ENCODE measurements at regions of chr9 and their contacts with region 1.

Region 1: DNA sequence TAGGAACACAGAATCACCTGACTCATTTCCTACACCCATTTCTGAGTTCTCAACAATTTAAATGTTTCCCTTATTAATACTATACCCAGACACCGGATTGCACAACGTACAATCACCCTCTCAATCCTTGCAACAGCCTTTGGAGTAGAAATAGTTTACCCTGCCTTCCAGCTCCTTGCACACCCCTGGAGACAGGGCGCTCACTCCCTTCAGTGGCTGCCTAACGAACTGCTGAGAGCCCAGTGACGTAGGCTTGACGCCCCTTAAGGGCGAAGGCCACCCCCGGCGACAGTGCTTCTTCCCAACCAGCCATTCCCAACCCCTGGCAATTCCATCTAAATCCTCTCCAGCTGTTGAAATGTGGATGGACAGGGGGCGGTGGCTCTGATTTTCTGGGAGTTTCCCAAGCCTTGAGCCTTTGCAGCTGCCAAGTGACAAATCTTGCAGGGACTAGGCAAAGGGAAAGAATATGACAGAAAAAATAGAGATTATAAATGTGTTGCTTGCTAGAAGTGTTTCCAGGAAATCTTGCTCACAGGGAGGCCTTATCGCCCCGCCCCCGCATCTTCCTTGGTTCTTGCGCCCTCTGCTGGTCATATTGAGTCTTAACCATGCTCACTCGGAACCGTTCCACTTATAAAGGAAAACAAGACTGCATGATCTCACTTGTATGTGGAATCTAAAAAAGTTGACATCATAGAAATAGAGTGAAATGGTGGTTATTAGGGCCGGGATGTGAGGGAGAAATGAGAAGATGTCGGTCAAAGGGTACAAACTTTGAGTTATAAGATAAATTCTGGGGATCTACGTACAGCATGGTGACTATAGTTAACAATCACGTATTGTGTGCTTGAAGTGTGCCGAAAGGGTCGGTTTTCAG is 7.6 kb upstream of the BARX1 start:
- DNase-seq: peak; percentile 84
- H3K4me3 ChIP-seq: no peak overlapping the region
- H3K27ac ChIP-seq: no peak overlapping the region
- H3K4me1 ChIP-seq: no peaks in the 10 kb centered on the region
- CTCF ChIP-seq: peak; percentile 95

Region 2: DNA sequence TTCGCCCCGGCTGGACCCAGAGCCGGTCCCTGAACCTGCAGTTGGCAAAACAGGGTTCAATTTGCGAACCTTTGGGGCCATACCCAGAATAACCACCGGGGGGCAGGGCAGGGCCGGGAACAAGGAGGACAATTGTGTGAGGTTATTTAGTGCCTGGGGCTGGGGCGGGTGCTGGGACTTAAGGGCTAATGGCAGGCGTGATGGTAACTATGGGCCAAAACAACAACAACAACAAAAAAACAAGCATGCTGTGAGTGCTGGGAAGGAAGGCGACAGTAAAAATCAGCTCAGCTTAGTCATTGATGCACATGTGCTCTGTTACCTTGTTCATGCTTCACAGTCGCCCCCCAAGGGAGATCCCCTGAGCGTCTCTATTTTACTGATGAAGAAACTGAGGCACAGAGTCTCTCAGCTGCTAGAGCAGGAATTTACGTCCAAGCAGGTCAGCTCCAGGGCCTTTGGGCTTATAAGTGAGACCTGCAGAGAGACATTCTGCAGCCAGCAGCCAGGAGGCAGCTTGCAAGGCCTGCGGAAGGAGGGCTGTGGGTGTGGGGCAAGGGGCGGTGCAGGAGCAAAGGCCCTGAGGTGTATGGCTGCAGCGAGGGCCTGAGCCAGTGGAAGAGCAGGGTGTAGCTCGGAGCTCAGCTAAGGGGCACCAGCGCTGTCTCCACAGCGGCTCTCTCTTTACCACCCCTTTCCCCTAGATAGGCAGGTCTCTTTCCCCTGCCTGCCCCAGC is 280.4 kb before region 1 on chr9:
- CTCF ChIA-PET with region 1: no interaction called
- POLR2A ChIA-PET with region 1: no interaction called
- intact Hi-C with region 1: loop called (anchors 1 kb)
- DNase-seq: peak; percentile 50
- H3K4me3 ChIP-seq: no peak overlapping the region
- H3K27ac ChIP-seq: no peak overlapping the region
- H3K4me1 ChIP-seq: no peaks in the 10 kb centered on the region
- CTCF ChIP-seq: peak; percentile 89

Measured in OCI-LY7 (cell line).